ENCODE measurements at regions of chr2 and their contacts with region 1.

Region 1: GRCh38 chr2:201668402-201668910 is 25.2 kb upstream of the TMEM237 start:
- DNase-seq: no peak
- H3K4me3 ChIP-seq: no peak overlapping the region
- CTCF ChIP-seq: no peak

Region 2: DNA sequence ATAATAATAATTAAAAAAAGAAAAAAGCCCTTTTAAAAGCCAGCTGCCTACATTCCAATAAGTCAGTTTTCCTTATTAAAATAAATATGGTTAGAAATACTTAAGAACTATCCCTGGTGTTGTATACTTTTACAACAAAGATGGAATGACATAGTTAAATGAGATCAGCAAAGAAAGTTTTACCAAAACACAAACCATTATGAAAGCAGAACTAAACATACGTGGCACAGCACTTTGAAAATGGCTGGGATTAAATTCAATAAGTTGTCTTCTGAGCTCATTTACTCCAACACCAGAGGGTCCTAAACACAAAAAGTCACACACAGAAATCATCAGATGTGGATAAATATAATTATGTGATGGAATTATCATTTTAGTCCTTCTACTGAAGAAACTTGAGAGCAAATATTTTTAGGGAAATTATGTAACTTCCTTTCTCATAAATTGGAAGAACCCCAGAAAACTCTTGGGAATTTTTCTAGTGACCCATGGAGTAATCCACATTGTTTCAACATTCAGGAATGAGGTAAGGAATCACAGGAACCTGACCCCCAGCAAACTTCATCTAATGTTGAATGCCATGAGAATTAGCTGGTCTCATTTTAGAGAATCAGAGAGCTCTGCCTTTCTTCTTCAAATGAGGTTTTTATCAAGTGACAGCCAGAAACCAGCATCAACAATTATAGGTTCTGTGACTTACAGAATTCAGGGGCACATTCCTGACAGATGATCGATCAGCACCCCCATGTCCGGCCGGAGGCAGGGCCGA is 13.7 kb before region 1 on chr2:
- CTCF ChIA-PET with region 1: interaction called, 13 read pairs
- POLR2A ChIA-PET with region 1: no interaction called
- DNase-seq: peak; percentile 74
- H3K4me3 ChIP-seq: no peak overlapping the region
- CTCF ChIP-seq: no peak

Region 3: GRCh38 chr2:201709747-201710146 is 41.3 kb after region 1 on chr2:
- CTCF ChIA-PET with region 1: interaction called, 10 read pairs
- POLR2A ChIA-PET with region 1: no interaction called
- DNase-seq: no peak
- H3K4me3 ChIP-seq: no peak overlapping the region
- CTCF ChIP-seq: no peak

Measured in AG04449 (cell line).